Heart left ventricle (tissue), 16 donors: ENCODE measurements at regions of chr19 and their contacts with region 1.

Region 1: DNA sequence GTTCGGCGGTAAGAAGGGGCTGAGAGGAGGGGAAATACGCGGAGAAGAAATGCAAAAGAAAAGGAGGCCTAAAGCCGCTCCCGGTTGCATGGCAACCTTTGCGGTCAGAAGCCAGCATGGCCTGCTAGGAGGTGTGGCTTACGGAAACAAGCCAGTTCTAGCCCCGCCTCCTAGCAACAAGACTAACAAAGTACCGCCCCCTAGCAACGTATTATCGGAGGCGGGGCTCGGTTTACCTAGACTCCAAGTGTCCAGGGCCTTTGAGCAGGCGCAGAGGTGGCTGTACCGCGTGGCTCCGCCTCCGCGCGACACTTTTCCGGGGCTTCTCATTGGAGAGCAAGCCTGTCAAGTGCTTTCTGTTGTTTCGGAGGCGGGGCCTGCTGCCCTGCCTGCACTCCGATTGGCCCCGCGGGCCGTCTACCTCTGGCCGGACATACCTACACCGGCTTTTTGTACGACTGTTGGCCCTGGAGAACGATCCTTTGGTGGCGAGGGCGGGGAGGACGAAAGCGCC is 337 bp upstream of the CYTH2 start:
- DNase-seq: peak; percentile 99 to 100 (median 100)
- ATAC-seq: peak; percentile 95 to 98 (median 96)
- H3K4me3 ChIP-seq: peak overlapping the region; percentile 66 to 100 (median 94)
- H3K27ac ChIP-seq: peak overlapping the region; percentile 94 to 100 (median 100)
- H3K4me1 ChIP-seq: peaks cover 2 to 26% (median 16%) of the 10 kb centered on the region in 12 donors
- H3K27me3 ChIP-seq: no peaks in the 10 kb centered on the region
- CTCF ChIP-seq: peak in 2 of 12 donors; percentile 5 to 30
- POLR2A ChIP-seq: no peak

Region 2: DNA sequence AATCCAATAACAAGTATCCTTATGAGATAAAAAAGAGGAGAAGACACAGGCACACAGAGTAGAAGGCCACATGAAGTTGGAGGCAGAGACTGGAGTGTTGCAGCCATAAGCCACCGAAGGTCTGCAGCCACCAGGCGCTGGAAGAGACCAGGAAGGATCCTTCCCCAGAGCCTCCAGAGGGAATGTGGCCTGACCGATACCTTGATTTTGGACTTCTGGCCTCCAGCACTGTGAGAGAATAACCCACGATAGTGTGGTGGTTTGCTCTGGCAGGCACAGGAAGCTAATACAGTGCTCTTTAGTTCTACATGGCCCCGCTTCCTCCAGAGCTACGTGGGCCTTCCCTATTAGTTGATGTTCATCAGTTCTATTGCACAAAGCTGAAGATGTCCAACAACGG is 567.5 kb before region 1 on chr19:
- intact Hi-C with region 1: no loop called
- DNase-seq: no peak
- ATAC-seq: no peak
- H3K4me3 ChIP-seq: no peak overlapping the region
- H3K27ac ChIP-seq: no peak overlapping the region
- H3K4me1 ChIP-seq: no peaks in the 10 kb centered on the region
- H3K27me3 ChIP-seq: peaks cover 0 to 19% (median 3%) of the 10 kb centered on the region in 9 donors
- CTCF ChIP-seq: no peak
- POLR2A ChIP-seq: no peak

Region 3: GRCh38 chr19:48445606-48446481 is 23.0 kb before region 1 on chr19 and contains the start of gene GRWD1:
- intact Hi-C with region 1: loop called in 3 of 10 experiments (anchors 1 to 2 kb)
- DNase-seq: peak; percentile 88 to 93 (median 91)
- ATAC-seq: peak; percentile 88 to 95 (median 91)
- H3K4me3 ChIP-seq: peak within 1 kb of the TSS; percentile 60 to 98 (median 89)
- H3K27ac ChIP-seq: peak within 1 kb of the TSS; percentile 12 to 94 (median 88)
- H3K4me1 ChIP-seq: peaks cover 0 to 27% (median 19%) of the 10 kb centered on the region in 12 donors
- H3K27me3 ChIP-seq: peaks cover 4 to 28% (median 15%) of the 10 kb centered on the region in 9 donors
- CTCF ChIP-seq: peak in 2 of 12 donors; percentile 3 to 7
- POLR2A ChIP-seq: peak in 1 of 2 donors; percentile 47
- total RNA-seq, gene GRWD1: 13.9 to 24.7 (median 19.0) TPM

Region 4: GRCh38 chr19:48492925-48493717 is 24.3 kb after region 1 on chr19:
- intact Hi-C with region 1: loop called in 2 of 10 experiments (anchors 2 kb)
- DNase-seq: peak; percentile 95 to 97 (median 97)
- ATAC-seq: peak; percentile 89 to 92 (median 90)
- H3K4me3 ChIP-seq: peak overlapping the region; percentile 23 to 78 (median 61)
- H3K27ac ChIP-seq: peak overlapping the region in 11 of 12 donors; percentile 29 to 77 (median 66)
- H3K4me1 ChIP-seq: peaks cover 0 to 39% (median 10%) of the 10 kb centered on the region in 12 donors
- H3K27me3 ChIP-seq: peaks cover 0 to 32% (median 1%) of the 10 kb centered on the region in 9 donors
- CTCF ChIP-seq: no peak
- POLR2A ChIP-seq: peak in 1 of 2 donors; percentile 63